ENCODE measurements at regions of chr17 and their contacts with region 1.

Region 1: DNA sequence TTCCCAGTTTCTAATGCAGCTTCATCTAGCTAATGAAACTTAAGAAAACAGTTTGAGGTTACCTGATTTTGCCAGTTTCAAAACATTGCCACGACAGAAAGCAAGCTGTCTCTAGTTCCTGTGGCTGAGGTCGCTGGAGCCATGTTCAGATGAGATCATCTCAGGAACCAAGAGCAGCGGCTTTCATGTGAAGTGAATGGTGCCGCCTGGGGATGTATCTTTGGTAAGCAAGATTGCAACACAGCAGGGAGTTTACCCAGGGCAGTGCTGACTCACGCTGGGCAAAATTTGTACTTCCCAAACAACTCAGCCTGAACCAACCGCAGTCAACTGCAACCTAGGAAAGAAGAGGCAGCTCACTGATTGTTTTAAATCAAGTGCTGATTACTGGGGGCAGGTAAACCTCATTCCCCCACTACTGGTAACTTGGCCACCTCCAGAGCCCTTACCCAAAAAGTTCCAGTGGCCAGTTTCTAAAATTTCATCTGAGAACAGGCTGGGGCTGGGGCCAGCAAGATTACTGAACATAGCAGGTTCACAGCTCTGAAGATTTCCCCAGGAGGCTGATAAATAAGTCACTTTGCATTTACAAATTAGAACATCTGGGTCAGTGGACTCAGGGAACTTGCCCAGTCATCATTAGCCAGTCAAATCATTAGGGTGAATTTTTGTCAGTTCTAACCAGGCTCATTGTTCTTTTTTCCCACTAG is at the start of gene RFFL:
- DNase-seq: peak; percentile 81
- CTCF ChIP-seq: peak; percentile 25

Region 2: GRCh38 chr17:35052780-35053179 is 10.9 kb before region 1 on chr17:
- CTCF ChIA-PET with region 1: interaction called, 11 read pairs
- POLR2A ChIA-PET with region 1: interaction called, 6 read pairs
- DNase-seq: no peak
- CTCF ChIP-seq: no peak

Region 3: GRCh38 chr17:35082073-35082657 is 18.5 kb after region 1 on chr17:
- CTCF ChIA-PET with region 1: interaction called, 15 read pairs
- POLR2A ChIA-PET with region 1: interaction called, 8 read pairs
- DNase-seq: no peak
- CTCF ChIP-seq: no peak